CD4-positive, alpha-beta T cell (primary cell): ENCODE measurements at regions of chr1 and their contacts with region 1.

Region 1: DNA sequence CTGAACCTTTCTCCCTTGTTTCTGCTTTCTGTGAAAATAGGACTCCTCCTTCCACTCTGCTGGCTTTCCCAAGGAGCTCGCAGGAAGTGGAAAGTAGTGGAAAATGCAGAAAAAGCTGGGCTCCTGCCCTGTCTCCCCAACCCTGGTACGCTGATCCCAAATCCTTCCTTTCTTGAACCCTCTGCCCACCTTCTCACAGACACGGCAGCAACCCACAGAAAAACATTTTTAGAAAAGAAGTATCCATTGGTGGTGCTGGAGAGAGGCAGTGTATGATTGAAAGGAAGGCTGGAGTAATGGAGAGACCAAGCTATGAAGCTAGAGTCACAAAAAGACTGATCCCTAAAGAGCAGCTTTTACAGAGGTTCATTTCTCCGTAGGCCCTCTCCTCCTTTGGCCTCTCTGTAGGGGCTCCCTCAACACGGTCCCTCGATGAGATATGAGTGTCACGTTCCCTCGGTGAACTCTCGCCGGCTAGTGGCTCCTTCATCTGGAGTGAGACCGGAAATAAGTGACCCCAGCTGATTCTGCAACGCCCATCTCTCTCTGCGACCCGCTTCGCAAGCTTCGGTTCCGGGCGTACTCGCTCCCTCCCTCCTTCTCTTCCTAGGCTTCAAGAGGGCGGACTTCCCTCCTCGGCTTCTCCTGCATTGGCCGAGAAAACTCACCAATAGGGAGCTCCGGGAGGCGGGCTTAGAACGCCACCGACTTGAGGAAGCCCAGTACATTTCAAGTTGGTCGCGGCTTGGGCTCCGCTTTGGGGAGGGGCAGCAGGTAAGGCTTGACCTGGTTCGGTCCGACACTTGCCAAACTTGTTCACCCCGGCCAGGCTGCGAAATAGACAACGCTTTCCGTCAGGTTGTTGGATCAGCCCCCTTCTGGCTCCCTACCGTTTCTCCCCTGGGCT is at the starts of genes ANKRD34A and POLR3GL:
- DNase-seq: peak; percentile 75 to 96 (median 88)
- ATAC-seq: peak; percentile 90
- H3K4me3 ChIP-seq: peak within 1 kb of the TSS; percentile 72
- H3K4me3 Mint-ChIP-seq: peak within 1 kb of the TSS; percentile 94
- H3K27ac ChIP-seq: peak within 1 kb of the TSS; percentile 58 to 62
- H3K27ac Mint-ChIP-seq: peak within 1 kb of the TSS; percentile 94
- H3K4me1 ChIP-seq: peaks cover 58% of the 10 kb centered on the region
- H3K4me1 Mint-ChIP-seq: peaks cover 58% of the 10 kb centered on the region
- H3K27me3 ChIP-seq: no peaks in the 10 kb centered on the region
- H3K27me3 Mint-ChIP-seq: no peaks in the 10 kb centered on the region
- CTCF ChIP-seq: no peak
- total RNA-seq, gene ANKRD34A: 0.42 to 0.47 TPM
- total RNA-seq, gene POLR3GL: 17.2 to 17.8 TPM

Region 2: DNA sequence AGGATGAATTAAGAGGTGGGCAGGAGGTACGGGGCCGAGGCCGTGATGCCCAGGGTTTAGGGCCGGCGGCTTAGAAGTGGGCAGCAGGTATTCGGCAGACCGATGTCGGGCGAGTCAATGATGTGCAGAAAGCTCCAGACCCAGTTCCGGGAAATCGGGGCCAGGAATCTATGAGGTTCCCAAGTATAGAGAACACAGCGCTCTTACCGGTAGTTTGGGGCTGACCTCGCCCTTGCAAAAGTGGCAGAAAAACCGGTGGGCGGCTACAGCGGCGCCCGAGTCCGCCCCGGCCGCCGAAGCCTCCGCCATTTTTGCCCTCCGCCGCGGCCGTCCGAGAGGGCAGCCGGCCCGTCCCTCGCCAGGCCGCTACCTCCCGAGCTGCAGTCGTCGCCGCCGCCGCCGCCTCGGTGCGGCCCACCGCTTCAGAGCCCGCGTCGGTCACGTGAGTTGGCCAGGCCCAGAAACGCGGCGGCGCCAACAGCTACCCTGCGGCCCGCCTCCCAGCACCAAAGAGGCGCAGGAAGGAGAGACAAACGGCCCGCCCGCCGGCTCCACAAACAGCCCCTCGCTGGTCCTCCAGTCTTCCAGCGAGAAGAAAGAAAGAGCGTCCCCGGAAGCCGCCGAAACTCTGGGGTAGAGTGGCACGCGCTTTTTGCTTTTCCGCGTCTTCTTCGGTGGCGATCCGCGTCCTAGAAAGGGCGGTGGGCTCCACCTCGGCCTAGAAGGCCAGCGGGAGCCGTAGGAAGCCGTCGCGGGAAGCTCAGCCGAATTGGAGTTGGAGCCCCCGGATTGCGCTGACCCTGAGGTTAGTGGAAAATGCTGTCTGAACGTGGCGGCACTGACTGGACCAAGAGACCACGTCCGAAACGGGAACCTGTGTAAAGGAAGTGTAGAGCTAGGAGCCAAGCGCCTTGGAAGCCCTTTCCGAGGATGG is 140.4 kb before region 1 on chr1 and contains the starts of genes POLR3C and RNF115:
- CTCF ChIA-PET with region 1: no interaction called
- POLR2A ChIA-PET with region 1: interaction called, 5 read pairs
- intact Hi-C with region 1: loop called in 1 of 2 experiments (anchors 5 kb)
- DNase-seq: peak; percentile 75 to 95 (median 86)
- ATAC-seq: peak; percentile 96
- H3K4me3 ChIP-seq: peak within 1 kb of the TSS; percentile 74
- H3K4me3 Mint-ChIP-seq: peak within 1 kb of the TSS; percentile 96
- H3K27ac ChIP-seq: peak within 1 kb of the TSS; percentile 78 to 81
- H3K27ac Mint-ChIP-seq: peak within 1 kb of the TSS; percentile 91
- H3K4me1 ChIP-seq: peaks cover 12% of the 10 kb centered on the region
- H3K4me1 Mint-ChIP-seq: peaks cover 29% of the 10 kb centered on the region
- H3K27me3 ChIP-seq: no peaks in the 10 kb centered on the region
- H3K27me3 Mint-ChIP-seq: no peaks in the 10 kb centered on the region
- CTCF ChIP-seq: no peak
- total RNA-seq, gene POLR3C: 18.6 to 19.9 TPM
- total RNA-seq, gene RNF115: 11.4 to 11.9 TPM

Region 3: GRCh38 chr1:145927063-145927886 is 37.0 kb before region 1 on chr1 and contains the start of gene RBM8A:
- CTCF ChIA-PET with region 1: interaction called, 40 read pairs
- POLR2A ChIA-PET with region 1: interaction called, 213 read pairs
- intact Hi-C with region 1: loop called in 1 of 2 experiments (anchors 2 kb)
- DNase-seq: peak; percentile 87 to 99 (median 90)
- ATAC-seq: peak; percentile 96
- H3K4me3 ChIP-seq: peak within 1 kb of the TSS; percentile 95
- H3K4me3 Mint-ChIP-seq: no peak within 1 kb of the TSS
- H3K27ac ChIP-seq: peak within 1 kb of the TSS; percentile 93 to 98
- H3K27ac Mint-ChIP-seq: no peak within 1 kb of the TSS
- H3K4me1 ChIP-seq: peaks cover 37% of the 10 kb centered on the region
- H3K4me1 Mint-ChIP-seq: peaks cover 21% of the 10 kb centered on the region
- H3K27me3 ChIP-seq: no peaks in the 10 kb centered on the region
- H3K27me3 Mint-ChIP-seq: no peaks in the 10 kb centered on the region
- CTCF ChIP-seq: peak; percentile 81
- total RNA-seq, gene RBM8A: 126 to 134 TPM

Region 4: GRCh38 chr1:145985502-145986439 is 21.5 kb after region 1 on chr1:
- CTCF ChIA-PET with region 1: interaction called, 3 read pairs
- POLR2A ChIA-PET with region 1: interaction called, 115 read pairs
- intact Hi-C with region 1: no loop called
- DNase-seq: peak in 2 of 14 experiments; percentile 37 to 42
- ATAC-seq: no peak
- H3K4me3 ChIP-seq: no peak overlapping the region
- H3K4me3 Mint-ChIP-seq: peak overlapping the region; percentile 35
- H3K27ac ChIP-seq: peak overlapping the region; percentile 42 to 45
- H3K27ac Mint-ChIP-seq: no peak overlapping the region
- H3K4me1 ChIP-seq: peaks cover 83% of the 10 kb centered on the region
- H3K4me1 Mint-ChIP-seq: peaks cover 25% of the 10 kb centered on the region
- H3K27me3 ChIP-seq: no peaks in the 10 kb centered on the region
- H3K27me3 Mint-ChIP-seq: no peaks in the 10 kb centered on the region
- CTCF ChIP-seq: no peak

Region 5: DNA sequence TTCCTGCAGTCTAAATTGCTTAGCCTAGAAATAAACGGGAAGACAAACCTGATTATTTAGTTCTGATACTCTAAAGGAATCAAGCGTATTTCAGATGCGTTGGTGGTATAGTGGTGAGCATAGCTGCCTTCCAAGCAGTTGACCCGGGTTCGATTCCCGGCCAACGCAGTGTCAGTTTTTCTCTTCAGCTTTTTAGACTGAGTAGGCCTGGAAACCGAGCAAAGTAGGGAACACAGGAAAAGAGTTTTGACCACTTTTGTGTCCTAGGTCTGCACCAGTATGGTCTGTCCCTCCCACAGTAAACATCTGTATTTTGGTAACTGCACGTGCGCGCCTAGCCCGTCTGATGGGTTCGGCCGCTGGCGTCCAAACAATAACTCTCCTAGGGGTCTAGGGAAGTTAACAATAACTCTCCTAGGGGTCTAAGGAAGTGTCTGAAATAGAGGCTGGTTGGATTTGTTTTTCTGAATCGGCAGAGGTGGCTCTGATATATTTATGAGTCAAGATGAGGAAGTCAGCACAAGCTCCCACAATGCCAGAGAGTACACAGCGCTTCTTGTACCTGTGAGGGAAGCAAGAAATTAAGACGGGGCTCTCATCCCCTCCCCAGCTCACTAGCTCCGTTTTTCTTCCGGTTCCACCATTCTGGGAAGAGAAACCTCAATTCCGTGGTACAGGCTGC is 72.9 kb after region 1 on chr1:
- CTCF ChIA-PET with region 1: no interaction called
- POLR2A ChIA-PET with region 1: interaction called, 62 read pairs
- intact Hi-C with region 1: no loop called
- DNase-seq: peak; percentile 50 to 88 (median 68)
- ATAC-seq: peak; percentile 59
- H3K4me3 ChIP-seq: peak overlapping the region; percentile 83
- H3K4me3 Mint-ChIP-seq: peak overlapping the region; percentile 98
- H3K27ac ChIP-seq: peak overlapping the region; percentile 58 to 83
- H3K27ac Mint-ChIP-seq: peak overlapping the region; percentile 100
- H3K4me1 ChIP-seq: peaks cover 38% of the 10 kb centered on the region
- H3K4me1 Mint-ChIP-seq: peaks cover 45% of the 10 kb centered on the region
- H3K27me3 ChIP-seq: no peaks in the 10 kb centered on the region
- H3K27me3 Mint-ChIP-seq: peaks cover 40% of the 10 kb centered on the region
- CTCF ChIP-seq: no peak